PC-3 (cell line): ENCODE measurements at regions of chr10 and their contacts with region 1.

Region 1: DNA sequence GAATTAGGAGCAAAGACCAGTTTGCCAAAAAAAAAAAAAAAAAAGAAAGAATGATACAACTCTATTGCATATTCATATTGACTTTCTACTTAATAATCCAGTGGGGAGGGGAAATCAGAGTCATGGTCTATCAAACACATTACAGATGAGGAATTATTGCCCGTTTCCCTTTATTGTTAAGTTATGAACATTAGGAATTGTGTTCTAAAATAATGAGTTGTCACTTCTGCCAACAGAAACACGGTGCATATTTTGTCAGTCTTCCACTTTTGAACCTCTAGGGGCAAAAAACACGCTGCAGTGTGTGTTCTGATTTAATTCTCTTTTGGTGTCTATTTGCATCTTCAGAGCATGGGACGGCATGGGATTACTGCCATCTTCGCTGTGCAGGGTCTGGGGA is 115.7 kb upstream of the RHOBTB1 start:
- DNase-seq: no peak
- ATAC-seq: no peak
- H3K4me3 ChIP-seq: no peak overlapping the region
- H3K27ac ChIP-seq: no peak overlapping the region
- H3K4me1 ChIP-seq: no peaks in the 10 kb centered on the region
- H3K27me3 ChIP-seq: peaks cover 6% of the 10 kb centered on the region; the same call in 1 of the 2 replicates
- CTCF ChIP-seq: 0 out of 2 replicates have a peak, but pooled peaks have one; percentile 14

Region 2: DNA sequence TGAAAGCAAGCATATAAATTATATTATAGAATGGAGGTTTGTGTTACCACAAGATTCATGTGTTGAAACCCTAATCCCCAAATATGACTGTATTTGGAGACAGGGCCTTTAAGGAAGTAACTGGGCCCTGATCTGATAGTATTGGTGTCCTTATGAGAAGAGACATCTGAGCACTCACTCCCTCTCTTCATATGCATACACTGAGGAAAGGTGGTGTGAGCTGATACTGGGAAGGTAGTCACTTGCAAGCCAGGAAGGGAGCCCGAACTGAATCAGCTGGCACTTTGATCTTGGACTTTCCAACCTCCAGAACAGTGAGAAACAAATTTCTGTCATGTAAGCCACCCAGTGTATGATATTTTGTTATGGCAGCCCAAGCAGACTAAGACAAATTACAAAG is 48.8 kb before region 1 on chr10:
- CTCF ChIA-PET with region 1: no interaction called
- POLR2A ChIA-PET with region 1: no interaction called
- intact Hi-C with region 1: no loop called
- DNase-seq: no peak
- ATAC-seq: no peak
- H3K4me3 ChIP-seq: no peak overlapping the region
- H3K27ac ChIP-seq: no peak overlapping the region
- H3K4me1 ChIP-seq: no peaks in the 10 kb centered on the region
- H3K27me3 ChIP-seq: peaks cover 5% of the 10 kb centered on the region; the same call in 1 of the 2 replicates
- CTCF ChIP-seq: no peak

Region 3: GRCh38 chr10:61040399-61041016 is 19.1 kb before region 1 on chr10:
- CTCF ChIA-PET with region 1: no interaction called
- POLR2A ChIA-PET with region 1: no interaction called
- intact Hi-C with region 1: no loop called
- DNase-seq: no peak
- ATAC-seq: no peak
- H3K4me3 ChIP-seq: no peak overlapping the region
- H3K27ac ChIP-seq: no peak overlapping the region
- H3K4me1 ChIP-seq: no peaks in the 10 kb centered on the region
- H3K27me3 ChIP-seq: peaks cover 4% of the 10 kb centered on the region; the same call in 1 of the 2 replicates
- CTCF ChIP-seq: no peak

Region 4: DNA sequence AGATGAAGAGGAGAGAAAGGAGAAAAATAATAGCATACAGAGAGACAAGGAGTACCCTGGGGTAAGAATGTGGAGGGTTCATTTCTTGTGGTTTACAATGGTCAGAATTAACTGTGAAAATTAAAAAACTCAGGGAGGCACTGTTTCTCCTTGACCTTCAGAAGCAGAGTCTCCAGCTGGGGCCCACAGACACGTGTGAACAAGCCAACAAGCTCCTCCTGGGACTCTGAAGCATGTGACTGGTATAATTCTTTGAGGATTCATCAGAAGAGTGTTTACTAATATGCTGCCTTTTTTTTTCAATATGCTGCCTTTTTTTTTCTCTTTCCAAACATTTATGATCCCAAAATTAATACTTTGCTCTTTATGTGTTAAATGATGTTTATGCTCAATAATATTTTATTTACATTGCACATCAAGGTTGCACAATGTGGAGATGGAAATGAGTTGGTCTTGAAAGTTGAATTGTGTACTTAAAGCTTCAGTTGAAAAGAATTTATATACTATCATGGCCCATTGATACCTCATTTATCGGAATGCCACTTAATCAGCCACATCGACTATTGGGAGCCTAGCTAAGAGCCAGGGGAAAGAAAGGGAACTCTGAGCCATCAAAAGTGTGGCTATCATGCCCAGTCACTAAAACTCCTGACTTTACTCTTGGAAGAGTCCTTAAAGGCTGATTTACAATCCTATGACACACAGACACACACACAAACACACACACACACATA is 19.1 kb after region 1 on chr10:
- CTCF ChIA-PET with region 1: interaction called, 10 read pairs
- POLR2A ChIA-PET with region 1: no interaction called
- intact Hi-C with region 1: no loop called
- DNase-seq: no peak
- ATAC-seq: no peak
- H3K4me3 ChIP-seq: no peak overlapping the region
- H3K27ac ChIP-seq: no peak overlapping the region
- H3K4me1 ChIP-seq: no peaks in the 10 kb centered on the region
- H3K27me3 ChIP-seq: peaks cover 9% of the 10 kb centered on the region
- CTCF ChIP-seq: no peak

Region 5: GRCh38 chr10:61100887-61101286 is 41.3 kb after region 1 on chr10:
- CTCF ChIA-PET with region 1: no interaction called
- POLR2A ChIA-PET with region 1: no interaction called
- intact Hi-C with region 1: no loop called
- DNase-seq: no peak
- ATAC-seq: no peak
- H3K4me3 ChIP-seq: no peak overlapping the region
- H3K27ac ChIP-seq: no peak overlapping the region
- H3K4me1 ChIP-seq: no peaks in the 10 kb centered on the region
- H3K27me3 ChIP-seq: peaks cover 34% of the 10 kb centered on the region
- CTCF ChIP-seq: no peak